WTC11 (cell line): ENCODE measurements at regions of chr3 and their contacts with region 1.

Region 1: DNA sequence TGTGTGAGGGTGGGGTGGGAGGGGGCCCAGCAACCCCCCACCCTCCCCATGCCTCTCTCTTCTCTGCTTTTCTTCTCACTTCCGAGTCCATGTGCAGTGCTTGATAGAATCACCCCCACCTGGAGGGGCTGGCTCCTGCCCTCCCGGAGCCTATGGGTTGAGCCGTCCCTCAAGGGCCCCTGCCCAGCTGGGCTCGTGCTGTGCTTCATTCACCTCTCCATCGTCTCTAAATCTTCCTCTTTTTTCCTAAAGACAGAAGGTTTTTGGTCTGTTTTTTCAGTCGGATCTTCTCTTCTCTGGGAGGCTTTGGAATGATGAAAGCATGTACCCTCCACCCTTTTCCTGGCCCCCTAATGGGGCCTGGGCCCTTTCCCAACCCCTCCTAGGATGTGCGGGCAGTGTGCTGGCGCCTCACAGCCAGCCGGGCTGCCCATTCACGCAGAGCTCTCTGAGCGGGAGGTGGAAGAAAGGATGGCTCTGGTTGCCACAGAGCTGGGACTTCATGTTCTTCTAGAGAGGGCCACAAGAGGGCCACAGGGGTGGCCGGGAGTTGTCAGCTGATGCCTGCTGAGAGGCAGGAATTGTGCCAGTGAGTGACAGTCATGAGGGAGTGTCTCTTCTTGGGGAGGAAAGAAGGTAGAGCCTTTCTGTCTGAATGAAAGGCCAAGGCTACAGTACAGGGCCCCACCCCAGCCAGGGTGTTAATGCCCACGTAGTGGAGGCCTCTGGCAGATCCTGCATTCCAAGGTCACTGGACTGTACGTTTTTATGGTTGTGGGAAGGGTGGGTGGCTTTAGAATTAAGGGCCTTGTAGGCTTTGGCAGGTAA is 8.1 kb downstream of the FAM131A start:
- DNase-seq: peak; percentile 73
- ATAC-seq: peak; percentile 92
- H3K4me3 Mint-ChIP-seq: no peak overlapping the region; the same call in 1 of the 2 replicates
- H3K27ac Mint-ChIP-seq: peak overlapping the region; percentile 78
- H3K4me1 Mint-ChIP-seq: peaks cover 16% of the 10 kb centered on the region
- H3K27me3 Mint-ChIP-seq: no peaks in the 10 kb centered on the region
- CTCF ChIP-seq: no peak

Region 2: GRCh38 chr3:184362668-184363540 is 17.4 kb after region 1 on chr3:
- CTCF ChIA-PET with region 1: interaction called, 11 read pairs
- POLR2A ChIA-PET with region 1: interaction called, 3 read pairs
- DNase-seq: peak; percentile 97
- ATAC-seq: peak; percentile 83
- H3K4me3 Mint-ChIP-seq: peak overlapping the region; percentile 98
- H3K27ac Mint-ChIP-seq: peak overlapping the region; percentile 99
- H3K4me1 Mint-ChIP-seq: peaks cover 24% of the 10 kb centered on the region
- H3K27me3 Mint-ChIP-seq: peaks cover 6% of the 10 kb centered on the region; the same call in 1 of the 2 replicates
- CTCF ChIP-seq: peak; percentile 12; the same call in 1 of the 2 replicates